B cell (primary cell): ENCODE measurements at regions of chr1 and their contacts with region 1.

Region 1: GRCh38 chr1:221203224-221204054 is 324.2 kb downstream of the HLX start:
- DNase-seq: peak; percentile 82
- ATAC-seq: peak; percentile 66
- H3K4me3 ChIP-seq: no peak overlapping the region
- H3K4me3 Mint-ChIP-seq: no peak overlapping the region
- H3K27ac ChIP-seq: no peak overlapping the region
- H3K27ac Mint-ChIP-seq: no peak overlapping the region
- H3K4me1 ChIP-seq: peaks cover 3% of the 10 kb centered on the region in 2 donors
- H3K4me1 Mint-ChIP-seq: peaks cover 3% of the 10 kb centered on the region
- H3K27me3 ChIP-seq: peaks cover 0 to 4% (median 2%) of the 10 kb centered on the region in 4 experiments
- H3K27me3 Mint-ChIP-seq: peaks cover 18% of the 10 kb centered on the region
- CTCF ChIP-seq: peak; percentile 98

Region 2: GRCh38 chr1:220642277-220642676 is 561.2 kb before region 1 on chr1:
- CTCF ChIA-PET with region 1: no interaction called
- POLR2A ChIA-PET with region 1: no interaction called
- intact Hi-C with region 1: no loop called
- DNase-seq: no peak
- ATAC-seq: no peak
- H3K4me3 ChIP-seq: no peak overlapping the region
- H3K4me3 Mint-ChIP-seq: no peak overlapping the region
- H3K27ac ChIP-seq: no peak overlapping the region
- H3K27ac Mint-ChIP-seq: no peak overlapping the region
- H3K4me1 ChIP-seq: no peaks in the 10 kb centered on the region
- H3K4me1 Mint-ChIP-seq: no peaks in the 10 kb centered on the region
- H3K27me3 ChIP-seq: no peaks in the 10 kb centered on the region
- H3K27me3 Mint-ChIP-seq: peaks cover 7% of the 10 kb centered on the region
- CTCF ChIP-seq: no peak

Region 3: GRCh38 chr1:220810179-220810653 is 393.2 kb before region 1 on chr1:
- CTCF ChIA-PET with region 1: interaction called, 48 read pairs
- POLR2A ChIA-PET with region 1: no interaction called
- intact Hi-C with region 1: loop called (anchors 1 kb)
- DNase-seq: peak; percentile 83
- ATAC-seq: peak; percentile 98
- H3K4me3 ChIP-seq: peak overlapping the region in 1 of 5 experiments; percentile 13
- H3K4me3 Mint-ChIP-seq: peak overlapping the region; percentile 70
- H3K27ac ChIP-seq: no peak overlapping the region
- H3K27ac Mint-ChIP-seq: no peak overlapping the region
- H3K4me1 ChIP-seq: peaks cover 0 to 5% of the 10 kb centered on the region in 2 donors
- H3K4me1 Mint-ChIP-seq: peaks cover 6% of the 10 kb centered on the region
- H3K27me3 ChIP-seq: peaks cover 0 to 9% (median 2%) of the 10 kb centered on the region in 4 experiments
- H3K27me3 Mint-ChIP-seq: peaks cover 7% of the 10 kb centered on the region
- CTCF ChIP-seq: peak; percentile 99

Region 4: DNA sequence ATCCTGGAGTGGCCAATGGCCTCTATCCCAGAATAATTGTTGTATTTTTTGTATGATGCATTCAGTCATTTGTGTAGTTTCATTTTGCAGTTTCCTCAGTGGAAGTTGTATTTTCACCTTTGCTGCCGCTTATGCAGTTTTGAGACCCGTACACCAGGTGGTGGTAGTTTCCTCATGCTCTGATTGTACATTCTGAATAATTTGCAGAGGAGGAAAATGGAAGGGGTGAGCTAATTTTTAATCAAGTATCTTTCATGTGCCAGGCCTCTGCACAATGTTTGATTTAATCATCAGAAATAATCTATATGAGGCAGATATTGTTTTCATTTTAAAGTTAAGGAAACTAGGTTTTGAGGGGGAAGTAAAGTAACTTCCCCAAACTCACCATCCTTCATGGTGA is 294.7 kb before region 1 on chr1:
- CTCF ChIA-PET with region 1: interaction called, 78 read pairs
- POLR2A ChIA-PET with region 1: no interaction called
- intact Hi-C with region 1: loop called (anchors 1 kb)
- DNase-seq: peak; percentile 49
- ATAC-seq: peak; percentile 36
- H3K4me3 ChIP-seq: no peak overlapping the region
- H3K4me3 Mint-ChIP-seq: no peak overlapping the region
- H3K27ac ChIP-seq: no peak overlapping the region
- H3K27ac Mint-ChIP-seq: no peak overlapping the region
- H3K4me1 ChIP-seq: peaks cover 7 to 10% of the 10 kb centered on the region in 2 donors
- H3K4me1 Mint-ChIP-seq: peaks cover 9% of the 10 kb centered on the region
- H3K27me3 ChIP-seq: peaks cover 0 to 7% (median 0%) of the 10 kb centered on the region in 4 experiments
- H3K27me3 Mint-ChIP-seq: peaks cover 14% of the 10 kb centered on the region
- CTCF ChIP-seq: peak; percentile 62

Region 5: DNA sequence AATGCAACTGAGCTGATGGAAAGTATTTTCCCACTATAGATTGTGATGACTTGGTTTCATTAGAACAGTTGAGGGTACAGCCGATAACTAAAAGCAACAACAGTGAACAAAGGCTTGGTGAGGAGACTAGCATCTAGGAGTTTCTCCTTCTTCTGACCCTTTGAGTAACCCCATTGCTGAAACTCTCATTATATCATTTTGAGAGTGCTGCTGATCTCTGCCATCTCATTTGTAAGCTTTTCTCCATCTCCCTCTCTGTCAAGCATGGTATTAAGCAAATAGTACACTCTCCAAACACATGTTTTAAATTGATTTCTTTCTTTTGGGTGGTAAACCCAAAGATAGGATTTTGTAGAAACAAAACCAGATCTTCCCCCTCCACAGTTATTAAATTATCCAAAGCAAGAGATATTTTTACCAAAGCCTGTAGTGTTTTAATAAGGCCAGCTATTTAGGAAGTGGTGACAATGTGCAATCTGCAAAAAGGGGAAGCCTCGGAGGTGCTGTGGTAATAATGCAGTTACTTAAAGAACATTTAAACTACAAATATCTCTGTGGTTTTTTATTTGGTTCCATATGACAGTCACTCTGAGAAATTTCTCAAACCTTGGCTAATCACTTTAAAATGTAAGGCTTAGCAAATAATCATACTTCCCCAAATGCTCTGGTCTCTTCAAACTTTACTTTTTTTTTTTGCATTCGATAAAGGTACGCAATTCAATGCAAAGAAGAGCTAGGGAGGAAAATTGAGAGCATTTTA is 36.7 kb before region 1 on chr1:
- CTCF ChIA-PET with region 1: interaction called, 16 read pairs
- POLR2A ChIA-PET with region 1: no interaction called
- intact Hi-C with region 1: loop called (anchors 5 kb)
- DNase-seq: peak; percentile 73
- ATAC-seq: peak; percentile 82
- H3K4me3 ChIP-seq: peak overlapping the region in 2 of 5 experiments; percentile 25 to 54
- H3K4me3 Mint-ChIP-seq: peak overlapping the region; percentile 35
- H3K27ac ChIP-seq: no peak overlapping the region
- H3K27ac Mint-ChIP-seq: peak overlapping the region; percentile 7
- H3K4me1 ChIP-seq: peaks cover 37 to 54% of the 10 kb centered on the region in 2 donors
- H3K4me1 Mint-ChIP-seq: peaks cover 53% of the 10 kb centered on the region
- H3K27me3 ChIP-seq: peaks cover 0 to 32% (median 17%) of the 10 kb centered on the region in 4 experiments
- H3K27me3 Mint-ChIP-seq: peaks cover 12% of the 10 kb centered on the region
- CTCF ChIP-seq: no peak

Region 6: GRCh38 chr1:221435504-221435904 is 232.1 kb after region 1 on chr1:
- CTCF ChIA-PET with region 1: interaction called, 21 read pairs
- POLR2A ChIA-PET with region 1: no interaction called
- intact Hi-C with region 1: loop called (anchors 1 kb)
- DNase-seq: peak; percentile 62
- ATAC-seq: peak; percentile 56
- H3K4me3 ChIP-seq: no peak overlapping the region
- H3K4me3 Mint-ChIP-seq: no peak overlapping the region
- H3K27ac ChIP-seq: no peak overlapping the region
- H3K27ac Mint-ChIP-seq: no peak overlapping the region
- H3K4me1 ChIP-seq: peaks cover 10 to 11% of the 10 kb centered on the region in 2 donors
- H3K4me1 Mint-ChIP-seq: peaks cover 18% of the 10 kb centered on the region
- H3K27me3 ChIP-seq: no peaks in the 10 kb centered on the region
- H3K27me3 Mint-ChIP-seq: peaks cover 9% of the 10 kb centered on the region
- CTCF ChIP-seq: peak; percentile 96